Breast epithelium (tissue), 4 donors: ENCODE measurements at regions of chr21 and their contacts with region 1.

Region 1: DNA sequence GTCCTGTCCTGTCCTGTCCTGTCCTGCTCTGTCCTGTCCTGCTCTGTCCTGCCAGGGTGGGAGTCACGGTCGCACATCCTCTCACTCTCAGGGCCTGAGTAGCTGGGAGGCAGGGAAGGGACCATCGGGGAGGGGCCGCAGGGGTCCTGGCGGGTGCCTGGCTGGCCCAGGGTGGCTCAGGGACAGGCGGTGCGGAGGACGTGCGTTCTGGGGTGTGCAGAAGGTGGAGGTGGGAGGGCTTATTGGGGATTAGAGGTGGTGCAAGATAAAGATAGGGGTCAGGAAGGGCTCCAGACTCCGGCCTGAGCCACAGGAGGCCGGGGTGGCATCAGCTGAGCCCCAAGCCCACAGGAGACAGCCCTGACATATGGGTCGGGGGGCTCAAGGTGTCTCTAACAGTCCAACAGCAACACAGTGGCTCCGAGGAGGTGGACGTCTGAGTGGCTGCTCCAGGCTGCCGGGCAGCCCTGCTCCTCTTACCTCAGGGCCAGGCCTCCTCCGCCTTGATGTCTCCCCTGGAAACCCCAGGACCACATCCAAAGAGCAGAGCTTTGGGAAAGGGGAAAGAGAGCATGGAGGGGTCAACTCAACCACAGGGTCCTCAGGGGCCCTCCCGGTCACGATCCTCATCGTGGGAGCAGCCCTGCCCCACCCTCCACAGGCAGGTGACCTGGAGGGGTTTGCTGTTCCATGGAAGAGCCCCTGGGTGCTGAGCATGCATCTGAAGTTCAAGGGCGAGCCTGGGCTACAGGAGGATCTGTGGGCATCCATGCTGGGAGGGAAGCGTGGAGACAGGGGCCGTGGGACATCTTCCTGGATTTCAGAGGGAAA is 39.6 kb upstream of the ADARB1 start:
- DNase-seq: no peak
- H3K4me3 ChIP-seq: no peak overlapping the region
- H3K27ac ChIP-seq: peak overlapping the region; percentile 45 to 74
- H3K4me1 ChIP-seq: no peaks in the 10 kb centered on the region
- H3K27me3 ChIP-seq: no peaks in the 10 kb centered on the region
- CTCF ChIP-seq: no peak
- POLR2A ChIP-seq: no peak

Region 2: DNA sequence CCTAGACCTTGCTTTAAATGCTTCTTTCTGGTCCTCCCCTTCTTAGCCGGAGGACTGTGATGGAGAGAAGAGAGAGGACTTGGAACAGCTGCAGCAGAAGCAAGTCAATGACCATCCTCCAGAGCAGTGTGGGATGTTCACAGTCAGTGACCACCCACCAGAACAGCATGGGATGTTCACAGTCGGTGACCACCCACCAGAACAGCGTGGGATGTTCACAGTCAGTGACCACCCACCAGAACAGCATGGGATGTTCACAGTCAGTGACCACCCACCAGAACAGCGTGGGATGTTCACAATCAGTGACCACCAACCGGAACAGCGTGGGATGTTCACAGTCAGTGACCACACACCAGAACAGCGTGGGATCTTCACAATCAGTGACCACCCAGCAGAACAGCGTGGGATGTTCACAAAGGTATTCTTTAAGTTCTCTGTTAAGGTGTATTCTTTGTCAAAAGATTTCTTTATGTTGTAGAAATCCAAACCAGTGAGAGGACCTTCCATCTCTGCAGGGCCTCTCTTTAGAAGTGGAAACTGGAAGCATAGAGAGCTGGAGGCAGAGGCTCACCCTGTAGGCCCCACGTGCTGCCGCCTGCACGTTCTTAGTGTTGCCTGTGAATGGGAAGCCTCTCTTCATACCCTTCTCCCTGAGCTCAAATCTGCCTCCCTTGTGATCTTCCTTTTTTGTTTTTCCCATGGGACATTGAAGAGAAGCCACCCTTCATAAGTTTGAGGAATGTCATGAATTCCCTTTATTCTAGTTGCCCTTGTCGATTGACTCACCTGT is 1299.8 kb after region 1 on chr21:
- intact Hi-C with region 1: loop called (anchors 5 kb)
- DNase-seq: no peak
- H3K4me3 ChIP-seq: no peak overlapping the region
- H3K27ac ChIP-seq: no peak overlapping the region
- H3K4me1 ChIP-seq: no peaks in the 10 kb centered on the region
- H3K27me3 ChIP-seq: no peaks in the 10 kb centered on the region
- CTCF ChIP-seq: no peak
- POLR2A ChIP-seq: no peak